Mammary epithelial cell (primary cell): ENCODE measurements at regions of chr5 and their contacts with region 1.

Region 1: GRCh38 chr5:14190194-14191164 is 47.3 kb downstream of the TRIO start:
- DNase-seq: peak; percentile 97
- H3K4me3 ChIP-seq: peak overlapping the region; percentile 24 to 28 (median 27)
- H3K27ac ChIP-seq: peak overlapping the region; percentile 97
- H3K4me1 ChIP-seq: peaks cover 62% of the 10 kb centered on the region
- H3K27me3 ChIP-seq: no peaks in the 10 kb centered on the region
- CTCF ChIP-seq: no peak

Region 2: GRCh38 chr5:13115476-13115875 is 1075.0 kb before region 1 on chr5:
- CTCF ChIA-PET with region 1: no interaction called
- dilution Hi-C with region 1: no loop called
- in situ Hi-C with region 1: no loop called
- intact Hi-C with region 1: no loop called
- DNase-seq: peak; percentile 8
- H3K4me3 ChIP-seq: no peak overlapping the region
- H3K27ac ChIP-seq: no peak overlapping the region
- H3K4me1 ChIP-seq: no peaks in the 10 kb centered on the region
- H3K27me3 ChIP-seq: no peaks in the 10 kb centered on the region
- CTCF ChIP-seq: no peak

Region 3: GRCh38 chr5:14035859-14036440 is 154.5 kb before region 1 on chr5:
- CTCF ChIA-PET with region 1: no interaction called
- dilution Hi-C with region 1: no loop called
- in situ Hi-C with region 1: no loop called
- intact Hi-C with region 1: loop called (anchors 2 kb)
- DNase-seq: peak; percentile 99
- H3K4me3 ChIP-seq: peak overlapping the region in 2 of 3 experiments; percentile 7 to 22
- H3K27ac ChIP-seq: peak overlapping the region; percentile 93
- H3K4me1 ChIP-seq: peaks cover 62% of the 10 kb centered on the region
- H3K27me3 ChIP-seq: no peaks in the 10 kb centered on the region
- CTCF ChIP-seq: no peak

Region 4: GRCh38 chr5:14156650-14157493 is 33.6 kb before region 1 on chr5:
- CTCF ChIA-PET with region 1: no interaction called
- dilution Hi-C with region 1: no loop called
- in situ Hi-C with region 1: no loop called
- intact Hi-C with region 1: loop called (anchors 2 kb)
- DNase-seq: peak; percentile 94
- H3K4me3 ChIP-seq: peak overlapping the region in 2 of 3 experiments; percentile 16 to 33
- H3K27ac ChIP-seq: peak overlapping the region; percentile 85
- H3K4me1 ChIP-seq: peaks cover 47% of the 10 kb centered on the region
- H3K27me3 ChIP-seq: no peaks in the 10 kb centered on the region
- CTCF ChIP-seq: no peak

Region 5: DNA sequence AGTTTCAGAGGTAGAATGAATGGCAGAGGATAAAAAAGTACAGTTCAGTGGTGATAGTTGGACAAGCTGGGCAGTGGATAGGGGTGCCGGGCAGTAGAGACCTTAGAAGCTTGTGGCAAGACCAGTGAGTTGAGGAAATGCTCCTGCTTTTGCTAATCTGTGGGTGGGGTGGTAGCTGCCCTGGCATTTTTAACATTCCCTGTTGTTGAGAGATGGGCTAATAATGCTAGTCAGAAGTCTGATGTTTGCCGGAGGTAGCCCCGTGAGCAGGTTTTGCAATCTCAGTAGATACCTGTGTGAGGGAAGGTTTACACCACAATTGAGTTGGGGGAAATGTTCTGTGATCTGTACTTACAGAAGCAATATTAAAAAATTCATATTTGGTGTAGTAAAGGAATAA is 43.7 kb after region 1 on chr5:
- CTCF ChIA-PET with region 1: no interaction called
- dilution Hi-C with region 1: no loop called
- in situ Hi-C with region 1: no loop called
- intact Hi-C with region 1: loop called (anchors 2 kb)
- DNase-seq: peak; percentile 71
- H3K4me3 ChIP-seq: peak overlapping the region in 1 of 3 experiments; percentile 11
- H3K27ac ChIP-seq: peak overlapping the region; percentile 77
- H3K4me1 ChIP-seq: peaks cover 28% of the 10 kb centered on the region
- H3K27me3 ChIP-seq: no peaks in the 10 kb centered on the region
- CTCF ChIP-seq: no peak